Mucosa of descending colon (tissue), 3 donors: ENCODE measurements at regions of chr9 and their contacts with region 1.

Region 1: DNA sequence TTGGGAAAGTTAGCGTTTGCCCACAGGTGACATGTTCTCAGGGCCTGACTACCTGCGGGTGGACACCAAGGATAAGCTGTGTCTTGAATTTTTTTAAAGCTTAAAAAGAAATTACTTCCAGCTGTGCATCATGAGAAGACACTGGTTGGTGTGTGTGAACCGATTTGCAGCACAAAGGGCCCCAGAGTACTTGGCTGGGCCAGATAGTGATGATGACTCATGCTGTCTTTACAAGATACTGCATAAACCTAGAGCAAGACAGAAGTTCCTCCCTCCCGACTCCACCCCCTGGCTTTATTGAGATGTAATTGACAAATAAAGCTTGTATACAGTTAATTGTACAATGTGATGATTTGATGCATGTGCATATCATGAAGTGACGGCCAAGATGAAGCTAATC is 212.8 kb downstream of the NXNL2 start:
- DNase-seq: no peak
- ATAC-seq: peak; percentile 62
- H3K4me3 ChIP-seq: no peak overlapping the region
- H3K4me1 ChIP-seq: no peaks in the 10 kb centered on the region
- CTCF ChIP-seq: no peak

Region 2: DNA sequence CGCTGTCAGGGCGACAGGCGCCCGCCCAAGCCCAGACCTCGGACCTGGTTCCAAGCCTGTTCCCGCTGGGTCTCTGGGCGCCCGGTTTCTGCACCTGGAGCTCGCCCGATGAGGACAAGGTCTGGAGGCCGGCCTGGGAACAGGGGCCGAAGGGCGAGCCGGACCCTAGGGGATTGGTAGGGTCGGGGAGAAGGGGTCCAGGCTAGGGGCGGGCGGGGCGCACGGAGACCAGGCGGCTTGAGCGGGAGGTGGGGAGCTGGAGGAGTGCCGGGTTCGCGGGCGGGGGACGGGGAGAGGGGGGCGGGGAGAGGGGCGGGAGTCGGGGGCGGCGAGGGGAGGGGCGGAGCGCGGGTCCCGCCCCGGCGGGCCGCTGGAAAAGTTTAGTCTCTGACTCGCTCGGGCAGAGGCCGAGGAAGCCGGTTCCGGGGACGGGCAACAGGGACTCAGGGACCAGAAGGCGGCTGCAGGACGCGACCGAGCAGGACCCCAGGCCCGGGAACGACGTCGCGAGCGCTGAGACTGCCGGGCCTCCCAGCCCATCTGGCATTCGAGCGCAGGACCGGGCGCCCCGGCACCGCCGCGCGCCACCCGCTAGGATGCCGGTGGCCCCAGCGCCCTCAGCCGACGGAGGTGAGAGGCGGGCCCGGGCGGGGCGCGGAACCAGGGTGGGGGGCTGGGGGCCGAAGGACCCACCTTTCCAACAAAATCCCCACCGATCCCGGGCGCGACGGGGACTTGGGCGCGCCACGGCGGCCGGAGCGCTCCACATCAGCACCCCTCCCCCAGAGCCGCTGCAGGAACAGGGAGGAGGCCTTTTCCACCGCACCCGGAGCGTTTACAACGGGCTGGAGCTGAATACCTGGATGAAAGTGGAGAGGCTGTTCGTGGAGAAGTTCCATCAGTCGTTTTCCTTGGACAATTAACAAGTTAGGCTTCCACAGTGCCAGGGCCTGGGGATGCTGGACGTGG is 243.6 kb after region 1 on chr9 and contains the start of gene S1PR3:
- intact Hi-C with region 1: loop called in 1 of 2 experiments (anchors 10 kb)
- DNase-seq: peak in 2 of 3 donors; percentile 18 to 47
- ATAC-seq: peak; percentile 56
- H3K4me3 ChIP-seq: peak within 1 kb of the TSS; percentile 11
- H3K4me1 ChIP-seq: peaks cover 3% of the 10 kb centered on the region
- CTCF ChIP-seq: no peak
- total RNA-seq, gene S1PR3: 0.87 to 12.2 (median 3.0) TPM